BJ (cell line): ENCODE measurements at regions of chr1 and their contacts with region 1.

Region 1: DNA sequence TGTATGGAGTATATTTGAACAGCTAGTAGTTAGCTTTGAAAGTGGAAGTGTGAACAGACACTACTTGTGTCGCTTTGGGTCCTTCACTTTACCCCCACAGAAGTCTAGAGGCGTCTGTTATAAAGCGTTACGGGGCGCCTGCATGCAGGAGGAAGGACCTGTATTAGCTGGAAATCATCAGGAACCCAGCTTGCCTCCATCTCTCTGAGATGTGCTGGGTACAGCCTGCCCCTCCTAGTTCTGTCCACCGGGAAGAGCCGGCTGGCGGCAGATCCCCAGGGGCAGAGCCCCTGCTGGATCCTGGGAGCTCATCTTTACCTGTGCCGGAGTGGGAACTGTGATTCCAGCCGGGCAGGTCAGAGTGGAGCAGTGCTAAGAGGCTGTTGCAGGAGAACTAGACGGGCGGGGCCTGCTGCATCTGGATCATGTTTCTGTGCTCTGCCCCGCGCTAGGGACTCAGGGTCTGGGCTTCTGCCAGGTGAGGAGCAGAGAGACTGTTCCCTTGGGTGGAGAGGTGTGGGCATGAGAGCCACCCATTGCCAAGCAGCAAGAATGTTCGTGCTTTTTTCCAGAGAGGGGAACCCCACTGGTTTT is 22.3 kb upstream of the SPSB1 start:
- DNase-seq: no peak
- H3K4me3 ChIP-seq: no peak overlapping the region
- H3K27me3 ChIP-seq: no peaks in the 10 kb centered on the region
- CTCF ChIP-seq: no peak

Region 2: DNA sequence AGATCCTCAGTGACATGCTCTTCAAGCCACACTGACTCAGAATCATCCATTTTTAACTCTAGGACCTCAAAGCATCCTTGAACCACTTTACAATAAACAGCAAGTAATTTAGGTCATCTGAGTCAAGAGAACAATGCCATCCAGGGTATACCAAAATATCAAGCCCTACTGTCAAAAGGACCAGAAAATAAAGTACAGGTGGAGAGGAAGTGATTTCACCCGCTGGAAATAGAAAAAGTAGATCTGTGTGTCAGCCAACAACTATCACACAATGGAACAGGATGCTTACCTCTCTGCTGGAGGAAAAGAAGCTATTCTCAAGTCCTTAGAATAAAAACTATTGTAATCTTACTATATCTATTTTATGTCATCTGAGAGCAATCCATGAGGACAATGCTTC is 490.0 kb before region 1 on chr1:
- CTCF ChIA-PET with region 1: no interaction called
- POLR2A ChIA-PET with region 1: no interaction called
- DNase-seq: no peak
- H3K4me3 ChIP-seq: no peak overlapping the region
- H3K27me3 ChIP-seq: no peaks in the 10 kb centered on the region
- CTCF ChIP-seq: no peak

Region 3: DNA sequence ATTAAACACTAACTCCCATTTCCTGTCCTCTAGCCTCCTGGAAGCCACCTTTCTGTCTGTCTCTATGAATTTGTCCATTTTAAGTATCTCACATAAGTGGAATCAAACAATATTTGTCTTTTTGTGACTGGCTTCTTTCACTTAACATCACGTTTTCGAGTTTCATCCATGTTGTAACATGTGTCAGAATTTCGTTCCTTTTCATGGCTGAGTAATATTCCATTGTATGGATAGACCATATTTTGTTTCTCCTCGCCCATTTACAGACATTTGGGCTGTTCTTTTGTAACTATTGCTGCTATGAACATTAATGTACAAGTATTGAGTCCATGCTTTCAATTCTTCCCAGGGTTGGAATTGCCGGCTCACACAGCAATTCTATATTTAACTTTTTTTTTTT is 51.5 kb before region 1 on chr1:
- CTCF ChIA-PET with region 1: no interaction called
- POLR2A ChIA-PET with region 1: no interaction called
- DNase-seq: no peak
- H3K4me3 ChIP-seq: no peak overlapping the region
- H3K27me3 ChIP-seq: no peaks in the 10 kb centered on the region
- CTCF ChIP-seq: no peak

Region 4: GRCh38 chr1:9253453-9254105 is 16.8 kb before region 1 on chr1:
- CTCF ChIA-PET with region 1: interaction called, 19 read pairs
- POLR2A ChIA-PET with region 1: no interaction called
- DNase-seq: no peak
- H3K4me3 ChIP-seq: no peak overlapping the region
- H3K27me3 ChIP-seq: no peaks in the 10 kb centered on the region
- CTCF ChIP-seq: no peak

Region 5: GRCh38 chr1:9300533-9300924 is 30.1 kb after region 1 on chr1:
- CTCF ChIA-PET with region 1: no interaction called
- POLR2A ChIA-PET with region 1: no interaction called
- DNase-seq: no peak
- H3K4me3 ChIP-seq: no peak overlapping the region
- H3K27me3 ChIP-seq: no peaks in the 10 kb centered on the region
- CTCF ChIP-seq: no peak

Region 6: DNA sequence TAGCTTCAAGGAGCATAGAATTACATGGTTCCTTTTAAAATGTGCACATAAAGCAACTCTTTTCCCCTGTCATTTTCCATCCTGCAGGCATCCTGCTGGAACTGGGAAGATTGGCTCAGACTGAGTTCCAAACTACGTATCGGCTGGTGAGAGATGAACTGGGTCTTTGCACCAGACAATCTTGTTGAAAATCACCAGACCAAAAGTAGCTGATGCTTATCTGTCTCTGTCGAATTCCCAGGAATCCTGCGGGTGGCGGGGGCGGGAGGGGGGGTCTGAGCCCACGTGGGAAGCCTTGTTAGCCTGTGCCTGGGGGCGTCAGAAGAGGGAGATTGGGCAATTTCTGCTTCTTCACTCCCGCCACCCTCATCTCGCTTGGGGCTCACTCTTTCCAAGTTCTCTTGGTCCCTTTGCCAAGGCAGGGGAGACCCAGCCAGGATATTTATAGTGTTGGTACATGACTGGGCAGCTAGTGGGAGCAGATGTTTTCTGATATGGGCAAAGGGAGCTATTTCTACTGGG is 178.8 kb after region 1 on chr1:
- CTCF ChIA-PET with region 1: interaction called, 65 read pairs
- POLR2A ChIA-PET with region 1: no interaction called
- DNase-seq: no peak
- H3K4me3 ChIP-seq: no peak overlapping the region
- H3K27me3 ChIP-seq: peaks cover 2% of the 10 kb centered on the region
- CTCF ChIP-seq: no peak

Region 7: DNA sequence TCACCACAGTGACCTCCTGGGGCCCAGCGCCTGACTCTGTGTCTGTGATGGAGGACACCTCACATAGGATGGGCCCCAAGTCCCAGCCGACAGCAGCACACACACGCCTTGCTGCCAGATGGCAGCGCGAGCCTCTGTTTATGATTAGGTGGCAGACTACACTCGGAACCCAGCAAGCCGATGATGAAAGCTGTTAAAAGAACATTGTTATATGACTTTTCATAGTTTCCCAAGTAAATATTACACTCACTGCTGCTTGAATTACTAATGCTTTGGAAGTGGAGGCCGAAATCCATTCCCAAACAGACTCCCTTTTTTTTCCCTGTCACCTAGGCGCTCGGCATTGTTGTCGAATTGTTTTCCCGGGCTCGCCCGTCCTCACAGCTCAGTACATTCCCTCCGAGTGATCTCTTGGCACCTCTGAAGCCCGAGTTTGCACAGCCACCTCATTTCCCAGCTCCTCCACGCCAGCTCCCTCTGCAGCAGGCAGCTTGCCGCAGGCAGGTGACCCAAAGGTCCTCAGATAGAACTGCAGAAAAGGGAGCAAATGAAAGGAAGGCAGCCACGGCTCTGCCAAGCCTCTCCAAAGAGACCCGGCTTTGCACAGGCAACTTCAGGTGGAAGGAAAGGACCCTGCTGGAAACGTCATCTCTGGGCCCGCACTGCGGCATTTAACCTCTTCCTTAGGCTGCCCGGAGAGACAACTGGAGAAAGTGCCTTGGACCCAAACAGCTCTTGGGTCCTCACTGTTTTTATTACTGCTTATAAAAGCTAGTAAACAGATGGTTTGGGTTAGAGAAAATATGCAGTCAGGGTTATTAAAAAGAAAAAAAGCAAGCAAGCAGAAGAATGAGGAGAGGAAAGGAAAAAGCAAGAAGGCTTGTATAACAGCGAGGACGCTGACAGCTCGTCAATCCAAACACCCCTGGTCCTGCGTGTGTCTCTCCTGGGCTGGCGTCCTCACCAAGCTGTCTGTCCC is 196.7 kb after region 1 on chr1:
- CTCF ChIA-PET with region 1: interaction called, 16 read pairs
- POLR2A ChIA-PET with region 1: no interaction called
- DNase-seq: peak; percentile 44
- H3K4me3 ChIP-seq: peak overlapping the region; percentile 14; the same call in 1 of the 2 replicates
- H3K27me3 ChIP-seq: peaks cover 7% of the 10 kb centered on the region
- CTCF ChIP-seq: no peak